Activated T-helper 2 cell treated with anti-CD3 and anti-CD28 coated beads, Interferon-gamma antibody, Interleukin-2, Interleukin-4, amounts not matched to agents 10 μg/mL and 5 μg/mL and 100 μg/mL, durations not matched to agents 14 hours and 24 hours and 36 hours (primary cell): ENCODE measurements at regions of chr12 and their contacts with region 1.

Region 1: DNA sequence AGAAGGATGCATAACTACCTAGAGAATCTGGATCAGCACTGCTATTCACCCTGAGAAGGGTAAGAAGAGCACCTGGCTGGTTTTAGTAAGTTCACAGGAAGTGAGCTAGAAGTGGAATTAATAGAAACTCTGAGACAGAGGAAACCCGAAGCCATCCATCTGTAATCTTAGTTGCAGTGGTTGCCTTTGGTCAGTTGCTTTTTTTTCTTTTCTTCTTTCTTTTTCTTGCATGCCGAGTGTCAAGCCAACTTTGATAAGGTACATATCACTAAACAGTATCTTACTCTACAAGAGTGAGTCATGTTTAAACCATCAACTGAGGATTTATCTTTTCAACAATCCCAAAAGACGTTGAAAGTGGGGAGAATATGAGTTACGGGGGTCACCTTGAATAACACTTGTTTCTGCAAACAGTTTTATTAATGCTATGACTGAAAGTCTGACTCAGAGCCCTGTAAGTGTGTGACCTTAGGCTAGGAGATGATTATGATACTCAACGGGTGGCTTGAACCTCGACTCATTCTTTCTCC is 26.7 kb downstream of the C12orf75 start:
- DNase-seq: no peak
- H3K4me3 Mint-ChIP-seq: peak overlapping the region; percentile 77
- H3K27ac Mint-ChIP-seq: peak overlapping the region; percentile 100
- H3K4me1 Mint-ChIP-seq: peaks cover 63% of the 10 kb centered on the region
- H3K27me3 Mint-ChIP-seq: no peaks in the 10 kb centered on the region

Region 2: GRCh38 chr12:105226219-105226618 is 131.0 kb before region 1 on chr12:
- intact Hi-C with region 1: loop called (anchors 2 kb)
- DNase-seq: peak; percentile 21
- H3K4me3 Mint-ChIP-seq: no peak overlapping the region
- H3K27ac Mint-ChIP-seq: peak overlapping the region; percentile 51
- H3K4me1 Mint-ChIP-seq: peaks cover 51% of the 10 kb centered on the region
- H3K27me3 Mint-ChIP-seq: no peaks in the 10 kb centered on the region

Region 3: GRCh38 chr12:105319691-105320209 is 37.5 kb before region 1 on chr12:
- intact Hi-C with region 1: loop called (anchors 5 kb)
- DNase-seq: no peak
- H3K4me3 Mint-ChIP-seq: no peak overlapping the region
- H3K27ac Mint-ChIP-seq: no peak overlapping the region
- H3K4me1 Mint-ChIP-seq: peaks cover 70% of the 10 kb centered on the region
- H3K27me3 Mint-ChIP-seq: no peaks in the 10 kb centered on the region

Region 4: GRCh38 chr12:105330283-105330930 is 26.8 kb before region 1 on chr12 and contains the start of gene C12orf75:
- intact Hi-C with region 1: loop called (anchors 1 kb)
- DNase-seq: peak; percentile 93
- H3K4me3 Mint-ChIP-seq: peak within 1 kb of the TSS; percentile 89
- H3K27ac Mint-ChIP-seq: peak within 1 kb of the TSS; percentile 97
- H3K4me1 Mint-ChIP-seq: peaks cover 66% of the 10 kb centered on the region
- H3K27me3 Mint-ChIP-seq: no peaks in the 10 kb centered on the region
- total RNA-seq, gene C12orf75: 246 and 252 TPM in 2 replicates

Region 5: DNA sequence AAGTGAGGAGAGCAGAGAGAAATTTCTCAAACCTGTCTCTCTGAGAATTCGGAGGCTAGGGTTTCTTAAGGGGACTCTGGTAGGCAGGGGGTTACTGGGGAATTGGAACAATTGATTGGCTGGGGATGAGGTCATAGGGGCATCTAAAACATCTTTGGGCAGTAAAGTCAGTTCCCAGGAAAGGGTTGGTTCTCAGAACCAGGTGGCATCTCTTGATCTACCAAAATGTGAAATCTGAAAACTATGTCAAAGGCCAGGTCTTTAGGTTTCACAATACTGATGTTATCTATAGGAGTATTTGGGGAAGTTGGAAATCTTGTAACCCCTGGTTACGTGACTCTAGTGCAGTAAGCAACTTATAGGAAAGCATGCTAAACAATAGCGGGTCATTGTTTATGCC is 19.8 kb before region 1 on chr12:
- intact Hi-C with region 1: loop called (anchors 1 kb)
- DNase-seq: no peak
- H3K4me3 Mint-ChIP-seq: peak overlapping the region; percentile 26
- H3K27ac Mint-ChIP-seq: peak overlapping the region; percentile 98
- H3K4me1 Mint-ChIP-seq: peaks cover 67% of the 10 kb centered on the region
- H3K27me3 Mint-ChIP-seq: no peaks in the 10 kb centered on the region